Left cardiac atrium (tissue), 4 donors: ENCODE measurements at regions of chrX and their contacts with region 1.

Region 1: DNA sequence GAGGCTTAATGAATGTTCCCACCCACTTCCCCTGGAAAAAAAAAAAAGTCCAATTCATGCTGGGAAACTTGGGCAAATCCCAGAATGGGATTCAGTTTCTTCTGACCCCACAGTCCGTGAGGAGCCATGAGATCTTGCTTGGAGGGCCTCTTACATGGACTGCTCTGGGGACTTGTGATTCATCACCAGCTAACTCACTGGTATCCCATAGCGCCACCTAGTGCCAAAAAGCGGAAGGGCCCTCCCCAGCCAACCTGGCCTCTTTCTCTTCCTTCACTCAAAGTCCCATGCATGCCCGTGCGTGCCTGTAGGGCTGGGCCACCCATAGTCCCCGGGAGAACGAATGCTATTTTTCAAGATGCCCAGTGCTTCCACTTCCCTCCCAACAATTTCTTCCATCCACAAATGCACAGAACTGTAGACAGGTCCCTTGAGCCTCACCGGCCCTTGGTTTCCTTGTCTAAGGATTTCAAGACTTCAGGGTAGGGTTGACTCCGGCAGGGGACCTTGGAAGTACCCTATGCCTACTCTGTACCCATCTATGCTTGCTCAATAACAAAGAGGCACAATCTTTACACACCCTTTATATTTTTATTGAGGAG is 5.1 kb downstream of the RTL5 start:
- DNase-seq: peak; percentile 86
- ATAC-seq: peak; percentile 77 to 86

Region 2: DNA sequence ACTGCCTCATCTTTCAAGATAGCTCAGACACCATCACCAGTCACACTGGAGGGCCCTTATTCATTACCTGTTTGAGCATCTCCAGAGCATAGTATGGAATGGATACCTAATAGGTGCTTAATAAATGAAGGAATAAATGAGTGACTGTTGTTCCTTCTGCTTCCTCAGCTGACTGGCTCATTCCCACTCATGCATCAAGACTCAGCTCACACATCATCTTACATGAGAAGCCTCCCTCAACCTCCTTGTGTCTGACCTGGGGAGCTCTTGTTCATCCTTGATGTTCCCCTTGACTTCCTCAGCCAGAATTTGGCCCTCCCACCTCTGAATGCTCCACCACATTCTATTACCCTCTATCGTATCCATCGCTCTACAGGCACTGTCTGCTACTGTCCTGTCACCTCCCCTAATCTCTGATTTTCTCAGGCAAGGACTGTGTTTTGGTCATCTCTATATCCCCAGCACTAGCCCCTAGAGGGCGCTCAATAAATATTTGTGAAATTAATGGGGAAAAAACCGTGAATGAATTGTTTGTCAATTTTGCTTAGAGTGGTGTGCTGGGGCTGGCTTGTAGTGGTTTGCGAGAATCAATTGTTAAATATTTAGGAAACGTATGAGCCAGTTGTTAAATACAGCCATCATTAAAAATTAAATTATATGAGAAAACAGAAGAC is 127.7 kb before region 1 on chrX:
- intact Hi-C with region 1: loop called in 1 of 2 experiments (anchors 5 kb)
- DNase-seq: no peak
- ATAC-seq: peak in 1 of 2 donors; percentile 33